Naive thymus-derived CD4-positive, alpha-beta T cell (primary cell): ENCODE measurements at regions of chr17 and their contacts with region 1.

Region 1: DNA sequence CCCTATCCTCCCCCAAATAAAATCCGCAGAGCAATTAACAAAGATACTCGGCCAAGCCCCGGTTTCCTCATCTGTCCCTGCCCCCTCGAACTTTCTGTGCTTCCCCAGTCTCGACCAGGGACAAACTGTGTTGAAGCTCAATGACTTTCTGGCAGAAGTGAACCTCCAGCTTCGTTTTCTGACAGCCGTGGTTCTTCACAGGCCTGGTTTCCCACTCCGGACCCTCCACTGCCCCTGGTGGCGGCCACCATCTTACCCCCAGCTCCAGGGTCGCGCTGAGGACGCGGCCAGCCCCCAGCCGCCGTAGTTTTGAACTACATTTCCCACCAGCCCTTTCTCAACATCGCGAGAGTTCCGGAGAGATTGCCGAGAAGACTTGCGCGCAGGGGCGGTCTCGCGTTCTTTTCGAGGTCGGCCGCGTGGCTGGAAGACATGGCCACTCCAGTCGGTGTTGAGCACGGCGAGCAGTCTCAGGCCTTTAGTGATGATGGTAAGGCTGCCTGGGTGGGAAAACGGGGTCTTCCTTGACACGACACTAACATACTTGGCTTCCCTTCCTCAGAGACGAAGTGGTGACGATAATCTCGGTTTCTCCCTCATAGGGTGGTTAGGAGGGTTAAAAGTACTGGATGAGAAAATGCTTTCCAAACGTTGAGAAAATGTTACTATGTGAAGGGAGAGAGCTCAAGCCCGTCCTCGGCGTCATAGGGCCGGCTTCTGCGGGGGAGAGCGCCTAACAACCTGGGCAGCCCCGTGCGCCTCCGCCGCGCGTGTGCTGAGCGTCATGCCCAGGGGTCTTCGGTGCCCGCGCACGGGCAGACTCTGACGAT is 17.7 kb downstream of the PRCD start:
- DNase-seq: peak; percentile 82 to 95 (median 92)
- ATAC-seq: peak; percentile 92
- H3K4me3 ChIP-seq: peak overlapping the region; percentile 77
- H3K4me3 Mint-ChIP-seq: peak overlapping the region; percentile 92 to 99 (median 98)
- H3K27ac ChIP-seq: peak overlapping the region; percentile 93
- H3K27ac Mint-ChIP-seq: peak overlapping the region; percentile 90 to 99 (median 96)
- H3K4me1 ChIP-seq: peaks cover 23 to 34% of the 10 kb centered on the region in 2 donors
- H3K4me1 Mint-ChIP-seq: peaks cover 25 to 66% (median 55%) of the 10 kb centered on the region in 7 donors
- H3K27me3 ChIP-seq: no peaks in the 10 kb centered on the region
- H3K27me3 Mint-ChIP-seq: no peaks in the 10 kb centered on the region

Region 2: DNA sequence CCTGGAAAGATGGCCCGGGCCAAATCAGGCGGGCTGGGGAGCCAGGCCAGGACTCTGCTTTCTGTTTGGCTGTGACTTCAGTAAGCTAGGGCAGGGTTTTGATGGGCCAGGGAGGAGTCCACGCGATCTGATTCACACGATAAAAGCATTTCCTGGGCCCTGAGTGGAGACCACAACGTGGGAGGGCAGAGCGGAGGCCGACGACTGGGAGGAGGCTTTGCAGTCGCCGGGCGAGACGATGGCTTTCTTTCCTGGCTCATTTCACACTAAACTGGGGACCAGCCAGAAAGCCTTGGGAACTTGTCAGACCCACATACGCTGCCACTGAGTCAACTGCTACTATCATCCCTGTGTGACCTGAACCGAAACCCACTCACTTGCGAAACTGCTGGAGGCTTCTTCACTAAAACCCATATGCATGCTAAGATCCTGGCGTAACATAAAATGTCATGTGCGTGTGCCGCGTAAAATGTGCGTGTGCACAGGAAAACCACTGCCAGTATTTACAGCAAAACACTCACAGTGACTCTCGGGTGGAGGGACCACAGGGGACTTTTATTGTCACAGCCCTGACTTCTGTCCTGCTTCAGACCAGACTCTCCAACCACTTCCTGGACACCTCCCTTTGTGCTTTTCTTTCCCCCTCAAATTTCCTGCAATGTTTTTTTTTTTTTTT is 42.2 kb before region 1 on chr17:
- CTCF ChIA-PET with region 1: interaction called, 6 read pairs
- POLR2A ChIA-PET with region 1: interaction called, 9 read pairs
- intact Hi-C with region 1: loop called (anchors 1 kb)
- DNase-seq: peak; percentile 62 to 94 (median 90)
- ATAC-seq: peak; percentile 90
- H3K4me3 ChIP-seq: peak overlapping the region; percentile 12
- H3K4me3 Mint-ChIP-seq: peak overlapping the region; percentile 75 to 89 (median 82)
- H3K27ac ChIP-seq: peak overlapping the region; percentile 96
- H3K27ac Mint-ChIP-seq: peak overlapping the region; percentile 95 to 100 (median 99)
- H3K4me1 ChIP-seq: peaks cover 36 to 58% of the 10 kb centered on the region in 2 donors
- H3K4me1 Mint-ChIP-seq: peaks cover 25 to 67% (median 37%) of the 10 kb centered on the region in 7 donors
- H3K27me3 ChIP-seq: no peaks in the 10 kb centered on the region
- H3K27me3 Mint-ChIP-seq: peaks cover 0 to 5% (median 0%) of the 10 kb centered on the region in 5 donors

Region 3: DNA sequence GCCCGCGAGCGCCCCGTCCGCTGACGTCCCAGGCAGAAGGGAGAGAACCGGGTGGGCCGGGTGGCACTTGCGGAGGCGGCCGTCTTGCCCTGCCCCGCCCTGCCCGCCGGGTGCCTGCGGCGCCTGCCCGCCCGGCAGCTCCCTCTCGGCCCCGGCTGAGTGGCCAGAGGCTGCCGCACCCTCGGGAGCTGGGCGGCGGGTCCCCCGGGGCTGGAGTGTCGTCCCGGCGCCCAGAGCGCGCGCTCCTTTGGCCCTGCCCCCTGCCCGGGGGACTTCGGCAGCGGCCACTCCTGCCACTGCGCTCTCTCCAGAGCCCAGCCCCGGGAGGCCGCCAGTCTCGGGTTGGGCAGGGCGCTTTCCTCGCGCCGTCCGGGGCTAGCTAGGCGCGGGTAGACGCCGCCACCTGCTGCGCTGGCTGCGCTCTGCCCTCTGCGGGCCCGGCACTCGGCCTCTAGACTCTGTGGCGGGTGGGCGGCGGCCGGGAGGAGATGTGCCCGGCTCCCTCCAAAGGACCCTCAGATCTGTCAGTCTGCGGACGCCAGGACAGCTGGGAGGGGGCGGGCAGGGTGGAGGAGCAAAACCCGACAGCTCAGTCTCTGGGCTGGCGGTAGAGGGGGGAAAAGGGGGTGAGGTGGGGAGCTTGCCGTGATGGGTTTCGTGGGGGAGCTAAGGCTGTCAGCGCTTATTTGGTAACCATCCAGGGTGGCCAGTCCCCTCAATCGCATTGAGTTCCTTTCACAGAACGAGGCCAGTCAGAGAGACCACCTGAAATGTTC is 28.4 kb after region 1 on chr17 and contains the start of gene ST6GALNAC2:
- CTCF ChIA-PET with region 1: no interaction called
- POLR2A ChIA-PET with region 1: no interaction called
- intact Hi-C with region 1: loop called in 1 of 2 experiments (anchors 1 kb)
- DNase-seq: peak in 3 of 9 donors; percentile 25 to 49 (median 45)
- ATAC-seq: peak; percentile 88
- H3K4me3 ChIP-seq: peak within 1 kb of the TSS; percentile 52
- H3K4me3 Mint-ChIP-seq: peak within 1 kb of the TSS; percentile 32 to 80 (median 67)
- H3K27ac ChIP-seq: no peak within 1 kb of the TSS
- H3K27ac Mint-ChIP-seq: no peak within 1 kb of the TSS
- H3K4me1 ChIP-seq: peaks cover 4 to 6% of the 10 kb centered on the region in 2 donors
- H3K4me1 Mint-ChIP-seq: peaks cover 2 to 17% (median 5%) of the 10 kb centered on the region in 7 donors
- H3K27me3 ChIP-seq: peaks cover 0 to 22% of the 10 kb centered on the region in 2 donors
- H3K27me3 Mint-ChIP-seq: peaks cover 43 to 78% (median 53%) of the 10 kb centered on the region in 5 donors
- total RNA-seq, gene ST6GALNAC2: 0.48 to 7.5 (median 0.58) TPM in 3 of 5 experiments, not detected in the others

Region 4: DNA sequence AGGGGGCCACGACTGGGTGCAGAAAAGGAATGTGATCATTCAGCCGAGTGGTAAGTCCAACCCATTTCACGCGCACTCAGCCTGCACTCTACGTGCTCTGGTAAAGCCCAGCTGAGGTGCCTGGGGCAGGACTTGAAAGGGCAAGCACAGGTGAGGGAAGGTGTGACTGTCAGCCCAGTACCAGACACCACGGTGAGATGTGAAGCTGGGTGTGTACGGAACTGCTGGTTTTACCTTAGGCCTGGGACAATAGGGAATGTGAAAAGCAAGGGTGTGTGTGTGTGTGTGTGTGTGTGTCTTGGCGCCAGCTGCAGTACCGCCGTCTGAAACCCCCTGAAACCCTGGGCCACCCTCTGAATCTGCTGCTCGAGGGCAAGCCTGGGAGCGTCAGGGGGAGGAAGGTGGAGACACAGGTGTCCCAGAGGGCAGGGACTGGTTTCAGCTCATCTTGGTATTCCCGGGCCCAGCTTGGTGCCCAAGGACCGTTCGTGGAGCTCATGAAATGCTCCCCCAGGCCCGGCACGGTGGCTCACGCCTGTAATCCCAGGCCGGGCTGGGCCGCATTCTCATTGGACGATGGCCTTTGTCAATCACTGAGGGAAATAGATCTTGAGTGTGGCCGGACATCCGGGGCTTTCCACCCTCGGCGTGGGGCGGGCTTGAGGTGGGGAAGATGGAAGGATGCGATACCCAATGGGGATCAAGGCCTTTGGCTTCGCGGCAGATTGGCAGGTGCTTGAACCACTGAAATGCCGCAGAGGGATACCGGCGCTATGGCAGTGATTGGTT is 113.7 kb after region 1 on chr17:
- CTCF ChIA-PET with region 1: interaction called, 7 read pairs
- POLR2A ChIA-PET with region 1: interaction called, 14 read pairs
- intact Hi-C with region 1: loop called in 1 of 2 experiments (anchors 1 kb)
- DNase-seq: peak; percentile 90 to 99 (median 98)
- ATAC-seq: peak; percentile 99
- H3K4me3 ChIP-seq: peak overlapping the region; percentile 76
- H3K4me3 Mint-ChIP-seq: peak overlapping the region; percentile 81 to 98 (median 92)
- H3K27ac ChIP-seq: peak overlapping the region; percentile 84
- H3K27ac Mint-ChIP-seq: peak overlapping the region; percentile 88 to 99 (median 96)
- H3K4me1 ChIP-seq: peaks cover 19 to 26% of the 10 kb centered on the region in 2 donors
- H3K4me1 Mint-ChIP-seq: peaks cover 20 to 43% (median 31%) of the 10 kb centered on the region in 7 donors
- H3K27me3 ChIP-seq: no peaks in the 10 kb centered on the region
- H3K27me3 Mint-ChIP-seq: peaks cover 0 to 10% (median 0%) of the 10 kb centered on the region in 5 donors

Region 5: GRCh38 chr17:76688165-76688622 is 130.6 kb after region 1 on chr17:
- CTCF ChIA-PET with region 1: no interaction called
- POLR2A ChIA-PET with region 1: no interaction called
- intact Hi-C with region 1: no loop called
- DNase-seq: no peak
- ATAC-seq: no peak
- H3K4me3 ChIP-seq: no peak overlapping the region
- H3K4me3 Mint-ChIP-seq: no peak overlapping the region
- H3K27ac ChIP-seq: no peak overlapping the region
- H3K27ac Mint-ChIP-seq: no peak overlapping the region
- H3K4me1 ChIP-seq: no peaks in the 10 kb centered on the region
- H3K4me1 Mint-ChIP-seq: no peaks in the 10 kb centered on the region
- H3K27me3 ChIP-seq: no peaks in the 10 kb centered on the region
- H3K27me3 Mint-ChIP-seq: peaks cover 0 to 4% (median 0%) of the 10 kb centered on the region in 5 donors

Region 6: GRCh38 chr17:76714822-76715495 is 157.4 kb after region 1 on chr17:
- CTCF ChIA-PET with region 1: interaction called, 15 read pairs
- POLR2A ChIA-PET with region 1: interaction called, 7 read pairs
- intact Hi-C with region 1: loop called in 1 of 2 experiments (anchors 1 kb)
- DNase-seq: peak; percentile 60 to 83 (median 70)
- ATAC-seq: peak; percentile 18
- H3K4me3 ChIP-seq: no peak overlapping the region
- H3K4me3 Mint-ChIP-seq: peak overlapping the region in 5 of 10 donors; percentile 1 to 41 (median 2)
- H3K27ac ChIP-seq: peak overlapping the region; percentile 32
- H3K27ac Mint-ChIP-seq: peak overlapping the region; percentile 22 to 82 (median 75)
- H3K4me1 ChIP-seq: peaks cover 14 to 30% of the 10 kb centered on the region in 2 donors
- H3K4me1 Mint-ChIP-seq: peaks cover 27 to 48% (median 41%) of the 10 kb centered on the region in 7 donors
- H3K27me3 ChIP-seq: no peaks in the 10 kb centered on the region
- H3K27me3 Mint-ChIP-seq: peaks cover 0 to 2% (median 0%) of the 10 kb centered on the region in 5 donors

Region 7: DNA sequence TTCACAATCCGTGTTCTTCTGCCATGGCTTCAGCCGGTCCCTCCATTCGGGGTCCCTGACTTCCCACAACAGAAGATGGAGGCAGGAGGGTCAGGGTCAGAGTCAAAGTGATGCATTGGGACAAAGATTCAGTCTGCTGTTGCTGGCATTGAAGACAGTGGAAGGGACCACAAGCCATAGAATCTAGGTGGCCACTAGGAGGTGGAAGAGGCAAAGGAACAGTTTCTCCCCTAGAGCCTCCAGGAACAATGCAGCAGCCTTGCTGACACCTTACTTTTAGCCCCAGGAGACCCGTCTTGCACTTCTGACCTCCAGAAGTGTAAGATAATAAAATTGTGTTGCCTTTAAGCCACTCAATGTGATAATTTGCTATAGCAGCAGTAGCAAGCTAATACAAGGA is 236.2 kb after region 1 on chr17:
- CTCF ChIA-PET with region 1: no interaction called
- POLR2A ChIA-PET with region 1: no interaction called
- intact Hi-C with region 1: no loop called
- DNase-seq: no peak
- ATAC-seq: no peak
- H3K4me3 ChIP-seq: no peak overlapping the region
- H3K4me3 Mint-ChIP-seq: no peak overlapping the region
- H3K27ac ChIP-seq: no peak overlapping the region
- H3K27ac Mint-ChIP-seq: no peak overlapping the region
- H3K4me1 ChIP-seq: peaks cover 0 to 9% of the 10 kb centered on the region in 2 donors
- H3K4me1 Mint-ChIP-seq: peaks cover 11 to 12% (median 12%) of the 10 kb centered on the region in 7 donors
- H3K27me3 ChIP-seq: no peaks in the 10 kb centered on the region
- H3K27me3 Mint-ChIP-seq: peaks cover 0 to 6% (median 0%) of the 10 kb centered on the region in 5 donors